SK-N-SH (cell line): ENCODE measurements at regions of chr18 and their contacts with region 1.

Region 1: DNA sequence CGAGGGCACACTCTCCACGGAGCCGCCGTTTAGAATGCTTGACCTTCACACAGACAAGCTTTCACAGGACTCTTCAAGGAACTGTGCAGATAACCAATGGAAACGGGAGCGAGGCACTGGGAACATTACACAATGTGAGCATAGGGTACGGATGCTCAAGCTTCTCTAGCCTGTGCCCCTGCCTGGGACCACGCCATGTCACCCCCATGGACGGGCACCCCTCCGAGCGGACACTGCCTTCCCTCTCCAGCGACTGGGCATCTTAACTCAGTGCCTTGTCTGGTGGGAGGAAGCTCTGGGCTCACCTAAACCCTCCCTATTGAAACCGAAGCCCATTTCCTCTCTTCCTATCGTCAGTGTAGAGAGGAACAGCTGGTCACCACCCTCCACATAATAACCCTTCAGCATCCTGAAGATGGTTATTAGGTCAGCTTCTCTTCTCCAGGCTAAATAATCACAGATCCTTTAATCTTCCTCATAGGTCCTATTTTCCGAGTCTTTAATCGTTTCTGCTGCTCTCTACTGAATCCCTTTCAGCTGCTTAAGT is 626.7 kb downstream of the GALR1 start:
- DNase-seq: no peak
- H3K4me3 ChIP-seq: no peak overlapping the region
- H3K27ac ChIP-seq: no peak overlapping the region
- H3K4me1 ChIP-seq: no peaks in the 10 kb centered on the region
- H3K27me3 ChIP-seq: no peaks in the 10 kb centered on the region
- CTCF ChIP-seq: no peak
- EP300 ChIP-seq: no peak
- RAD21 ChIP-seq: no peak

Region 2: GRCh38 chr18:77899972-77900754 is 23.8 kb after region 1 on chr18:
- CTCF ChIA-PET with region 1: interaction called, 26 read pairs
- POLR2A ChIA-PET with region 1: no interaction called
- DNase-seq: peak; percentile 89
- H3K4me3 ChIP-seq: peak overlapping the region; percentile 22 to 43; a peak in 1 of 4 replicates
- H3K27ac ChIP-seq: no peak overlapping the region
- H3K4me1 ChIP-seq: no peaks in the 10 kb centered on the region; a peak in 1 of 4 replicates
- H3K27me3 ChIP-seq: no peaks in the 10 kb centered on the region; the same call in 1 of the 2 replicates
- CTCF ChIP-seq: peak; percentile 61
- EP300 ChIP-seq: no peak
- RAD21 ChIP-seq: 0 out of 2 replicates have a peak, but pooled peaks have one; percentile 21

Region 3: DNA sequence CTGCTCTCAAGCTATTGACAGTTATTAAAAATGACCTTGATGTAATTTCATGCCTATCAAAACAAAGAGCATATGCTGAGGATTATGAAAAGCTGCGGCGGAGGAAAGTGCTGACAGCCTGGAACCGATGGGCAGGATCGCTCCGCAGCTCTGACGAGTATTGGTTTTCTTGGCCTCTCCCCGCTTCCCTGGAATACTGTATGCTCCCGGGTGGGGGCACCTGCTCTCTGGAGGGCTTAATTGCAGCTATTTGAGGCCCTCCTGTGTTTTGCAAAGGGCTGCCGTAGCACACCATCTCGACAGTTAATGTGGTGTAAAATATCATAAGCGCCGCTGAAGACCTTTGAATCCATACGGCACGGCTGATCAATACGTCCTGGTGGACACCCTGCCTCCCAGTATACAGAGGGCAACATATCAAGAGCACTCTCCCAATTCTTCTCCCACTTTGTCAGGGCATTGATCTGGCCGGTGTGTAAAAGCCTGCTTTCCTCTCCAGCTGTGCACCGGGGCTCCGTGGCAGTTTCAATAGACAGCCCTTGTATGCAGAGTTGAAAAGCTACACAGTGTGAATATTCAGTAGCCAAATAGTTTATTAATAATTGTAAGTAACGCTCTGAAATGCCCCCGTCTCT is 35.7 kb after region 1 on chr18:
- CTCF ChIA-PET with region 1: no interaction called
- POLR2A ChIA-PET with region 1: no interaction called
- DNase-seq: no peak
- H3K4me3 ChIP-seq: no peak overlapping the region
- H3K27ac ChIP-seq: no peak overlapping the region
- H3K4me1 ChIP-seq: no peaks in the 10 kb centered on the region
- H3K27me3 ChIP-seq: peaks cover 16% of the 10 kb centered on the region; the same call in 1 of the 2 replicates
- CTCF ChIP-seq: no peak
- EP300 ChIP-seq: no peak
- RAD21 ChIP-seq: no peak